B cell (primary cell): ENCODE measurements at regions of chr15 and their contacts with region 1.

Region 1: DNA sequence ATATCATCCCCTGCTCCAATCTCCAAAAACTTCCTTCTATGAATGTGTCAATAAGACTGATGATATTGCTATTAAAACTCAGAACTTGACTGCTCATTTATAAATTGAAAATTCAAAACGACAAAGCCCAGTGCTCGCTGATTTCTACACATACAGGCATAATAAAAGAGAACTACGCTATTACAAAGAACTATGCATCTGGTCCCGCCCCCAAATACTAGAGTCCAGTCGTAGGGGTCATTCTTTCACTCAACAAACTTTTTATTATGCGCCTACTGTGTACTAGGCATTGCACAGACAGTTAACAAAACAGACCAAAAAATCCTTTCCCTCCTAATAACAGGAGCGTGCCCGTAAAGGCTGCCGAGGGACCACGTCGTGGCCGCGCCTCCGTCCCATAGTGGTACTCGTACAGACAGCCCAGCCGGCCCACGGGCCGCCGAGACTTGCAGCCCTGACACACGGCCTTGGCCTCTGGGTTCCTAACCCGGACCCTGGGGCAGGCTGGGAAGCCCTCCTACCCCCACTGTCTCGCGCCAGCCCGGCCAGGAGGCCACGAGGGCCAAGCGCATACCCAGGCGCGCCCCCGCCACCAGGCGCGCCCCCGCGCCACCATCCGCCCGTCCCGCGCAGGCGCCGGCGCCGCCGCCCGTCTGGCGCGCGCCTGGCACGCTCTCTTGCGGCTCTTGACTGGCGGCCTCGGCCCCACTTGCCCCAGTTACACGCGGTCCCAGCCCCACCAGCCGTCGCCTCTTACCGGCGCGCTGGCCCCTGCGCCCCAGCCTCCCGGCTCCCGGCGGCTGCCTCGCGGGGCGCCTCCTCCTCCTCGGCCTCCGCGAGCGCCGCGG is 757 bp downstream of the AVEN start:
- DNase-seq: peak; percentile 89
- ATAC-seq: peak; percentile 78
- H3K4me3 ChIP-seq: peak overlapping the region; percentile 63 to 98 (median 66)
- H3K4me3 Mint-ChIP-seq: peak overlapping the region; percentile 97
- H3K27ac ChIP-seq: peak overlapping the region; percentile 49 to 78
- H3K27ac Mint-ChIP-seq: peak overlapping the region; percentile 96
- H3K4me1 ChIP-seq: peaks cover 14 to 15% of the 10 kb centered on the region in 2 donors
- H3K4me1 Mint-ChIP-seq: peaks cover 18% of the 10 kb centered on the region
- H3K27me3 ChIP-seq: no peaks in the 10 kb centered on the region
- H3K27me3 Mint-ChIP-seq: no peaks in the 10 kb centered on the region
- CTCF ChIP-seq: no peak

Region 2: GRCh38 chr15:33639978-33640377 is 398.3 kb before region 1 on chr15:
- CTCF ChIA-PET with region 1: no interaction called
- POLR2A ChIA-PET with region 1: no interaction called
- intact Hi-C with region 1: no loop called
- DNase-seq: peak; percentile 7
- ATAC-seq: no peak
- H3K4me3 ChIP-seq: no peak overlapping the region
- H3K4me3 Mint-ChIP-seq: no peak overlapping the region
- H3K27ac ChIP-seq: no peak overlapping the region
- H3K27ac Mint-ChIP-seq: no peak overlapping the region
- H3K4me1 ChIP-seq: peaks cover 4 to 24% of the 10 kb centered on the region in 2 donors
- H3K4me1 Mint-ChIP-seq: peaks cover 18% of the 10 kb centered on the region
- H3K27me3 ChIP-seq: no peaks in the 10 kb centered on the region
- H3K27me3 Mint-ChIP-seq: peaks cover 7% of the 10 kb centered on the region
- CTCF ChIP-seq: no peak

Region 3: GRCh38 chr15:34001536-34001935 is 36.7 kb before region 1 on chr15:
- CTCF ChIA-PET with region 1: no interaction called
- POLR2A ChIA-PET with region 1: no interaction called
- intact Hi-C with region 1: no loop called
- DNase-seq: no peak
- ATAC-seq: no peak
- H3K4me3 ChIP-seq: no peak overlapping the region
- H3K4me3 Mint-ChIP-seq: no peak overlapping the region
- H3K27ac ChIP-seq: no peak overlapping the region
- H3K27ac Mint-ChIP-seq: no peak overlapping the region
- H3K4me1 ChIP-seq: no peaks in the 10 kb centered on the region
- H3K4me1 Mint-ChIP-seq: no peaks in the 10 kb centered on the region
- H3K27me3 ChIP-seq: no peaks in the 10 kb centered on the region
- H3K27me3 Mint-ChIP-seq: no peaks in the 10 kb centered on the region
- CTCF ChIP-seq: no peak

Region 4: GRCh38 chr15:34085746-34086145 is 47.5 kb after region 1 on chr15:
- CTCF ChIA-PET with region 1: no interaction called
- POLR2A ChIA-PET with region 1: no interaction called
- intact Hi-C with region 1: loop called (anchors 5 kb)
- DNase-seq: no peak
- ATAC-seq: no peak
- H3K4me3 ChIP-seq: no peak overlapping the region
- H3K4me3 Mint-ChIP-seq: no peak overlapping the region
- H3K27ac ChIP-seq: no peak overlapping the region
- H3K27ac Mint-ChIP-seq: no peak overlapping the region
- H3K4me1 ChIP-seq: no peaks in the 10 kb centered on the region
- H3K4me1 Mint-ChIP-seq: peaks cover 3% of the 10 kb centered on the region
- H3K27me3 ChIP-seq: no peaks in the 10 kb centered on the region
- H3K27me3 Mint-ChIP-seq: no peaks in the 10 kb centered on the region
- CTCF ChIP-seq: no peak

Region 5: DNA sequence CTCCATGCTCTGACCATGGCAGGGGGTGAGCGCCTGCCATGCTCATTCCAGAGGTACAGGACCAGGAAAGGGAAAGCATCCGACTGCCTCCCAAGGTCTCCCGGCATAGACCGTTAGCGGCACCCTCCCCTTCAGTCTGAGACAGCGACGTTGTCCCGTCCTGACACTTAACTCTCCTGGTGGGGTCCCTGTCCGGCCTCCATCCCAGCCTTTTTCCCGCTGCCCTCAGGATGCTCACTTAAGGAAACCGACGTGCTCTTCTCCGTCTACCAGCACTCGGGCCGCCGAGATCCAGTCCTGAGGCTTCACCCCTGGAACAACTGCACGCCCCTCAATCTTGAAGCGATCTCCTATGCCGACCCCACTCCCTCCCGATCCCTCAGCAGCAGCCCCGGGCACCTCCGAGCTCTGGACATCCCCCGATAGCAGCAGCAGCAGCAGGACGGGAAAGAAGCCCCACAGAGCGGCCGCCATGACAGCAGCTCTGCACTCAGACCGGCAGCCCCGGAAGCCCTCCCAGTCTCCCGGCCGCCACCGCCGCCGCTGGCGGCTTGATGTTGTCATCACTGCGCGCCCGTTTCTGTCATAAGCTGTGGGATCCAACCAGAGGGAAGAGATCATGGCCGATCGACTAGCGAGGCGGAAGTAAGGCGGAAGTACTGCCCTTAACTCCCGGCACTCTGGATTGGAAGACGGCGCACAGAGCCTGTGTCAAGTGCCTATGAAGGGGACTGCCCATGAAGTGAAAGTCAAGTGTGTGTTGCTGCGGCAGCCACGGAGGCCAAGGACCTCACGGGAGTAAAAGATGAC is 63.3 kb after region 1 on chr15 and contains the starts of genes EMC7 and PGBD4:
- CTCF ChIA-PET with region 1: no interaction called
- POLR2A ChIA-PET with region 1: interaction called, 3 read pairs
- intact Hi-C with region 1: loop called (anchors 1 kb)
- DNase-seq: peak; percentile 99
- ATAC-seq: peak; percentile 99
- H3K4me3 ChIP-seq: peak within 1 kb of the TSS; percentile 80 to 99 (median 82)
- H3K4me3 Mint-ChIP-seq: peak within 1 kb of the TSS; percentile 98
- H3K27ac ChIP-seq: peak within 1 kb of the TSS; percentile 92 to 98
- H3K27ac Mint-ChIP-seq: peak within 1 kb of the TSS; percentile 99
- H3K4me1 ChIP-seq: peaks cover 18 to 19% of the 10 kb centered on the region in 2 donors
- H3K4me1 Mint-ChIP-seq: peaks cover 41% of the 10 kb centered on the region
- H3K27me3 ChIP-seq: no peaks in the 10 kb centered on the region
- H3K27me3 Mint-ChIP-seq: no peaks in the 10 kb centered on the region
- CTCF ChIP-seq: no peak
- total RNA-seq, gene EMC7: 28.8 and 29.9 TPM in 2 replicates
- total RNA-seq, gene PGBD4: 5.2 and 5.6 TPM in 2 replicates